Gastrocnemius medialis (tissue), 4 donors: ENCODE measurements at regions of chr19 and their contacts with region 1.

Region 1: GRCh38 chr19:15332311-15332996 is at the start of gene BRD4:
- DNase-seq: peak; percentile 38 to 62
- ATAC-seq: peak; percentile 63 to 72
- H3K4me3 ChIP-seq: peak within 1 kb of the TSS; percentile 82 to 97 (median 96)
- H3K27ac ChIP-seq: peak within 1 kb of the TSS; percentile 91 to 98 (median 96)
- H3K4me1 ChIP-seq: peaks cover 66 to 70% of the 10 kb centered on the region in 2 donors
- H3K27me3 ChIP-seq: no peaks in the 10 kb centered on the region
- CTCF ChIP-seq: no peak
- POLR2A ChIP-seq: peak; percentile 72 to 78
- total RNA-seq, gene BRD4: 64.8 to 83.2 (median 73.9) TPM

Region 2: GRCh38 chr19:14214580-14214979 is 1117.9 kb before region 1 on chr19:
- in situ Hi-C with region 1: no loop called
- intact Hi-C with region 1: no loop called
- DNase-seq: no peak
- ATAC-seq: no peak
- H3K4me3 ChIP-seq: no peak overlapping the region
- H3K27ac ChIP-seq: no peak overlapping the region
- H3K4me1 ChIP-seq: no peaks in the 10 kb centered on the region
- H3K27me3 ChIP-seq: peaks cover 9 to 15% (median 14%) of the 10 kb centered on the region in 3 donors
- CTCF ChIP-seq: no peak
- POLR2A ChIP-seq: no peak

Region 3: GRCh38 chr19:15234043-15234873 is 98.2 kb before region 1 on chr19:
- in situ Hi-C with region 1: no loop called
- intact Hi-C with region 1: no loop called
- DNase-seq: no peak
- ATAC-seq: no peak
- H3K4me3 ChIP-seq: no peak overlapping the region
- H3K27ac ChIP-seq: no peak overlapping the region
- H3K4me1 ChIP-seq: no peaks in the 10 kb centered on the region
- H3K27me3 ChIP-seq: peaks cover 13 to 16% (median 15%) of the 10 kb centered on the region in 3 donors
- CTCF ChIP-seq: no peak
- POLR2A ChIP-seq: no peak

Region 4: DNA sequence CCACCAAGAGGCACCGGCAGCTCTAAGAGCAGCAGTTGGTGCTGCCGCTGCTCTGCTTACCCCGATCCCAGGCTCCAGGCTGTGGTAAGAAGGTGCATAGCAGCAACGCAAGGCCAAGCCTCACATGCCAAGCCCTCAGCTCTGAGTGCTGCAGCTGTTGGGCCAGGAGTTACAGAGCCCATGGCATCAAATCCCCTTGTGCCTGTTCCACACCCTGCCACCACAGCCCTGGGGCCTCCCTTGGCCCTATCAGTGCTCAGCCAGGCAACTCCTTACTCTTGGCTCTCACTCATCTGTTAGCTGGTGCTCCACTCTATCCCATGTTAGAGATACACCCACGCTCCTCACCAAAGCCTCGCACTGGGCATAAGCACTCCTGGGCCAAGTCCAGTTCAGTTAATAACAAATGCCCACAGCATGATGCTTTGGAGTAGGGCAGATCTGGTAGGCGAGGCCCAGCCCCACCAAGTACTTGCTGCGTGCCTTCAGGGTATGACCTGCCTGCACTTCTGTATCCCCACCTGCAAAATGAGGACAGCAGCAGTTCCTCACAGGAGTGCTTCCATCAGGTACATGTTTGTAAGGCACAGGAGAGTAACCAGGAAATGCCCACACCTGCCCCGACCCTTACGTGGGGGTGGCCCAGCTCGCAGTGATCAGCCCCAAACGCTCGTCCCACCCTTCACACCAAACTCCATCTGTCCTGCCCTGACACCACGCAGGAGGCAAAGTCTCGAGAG is 70.1 kb after region 1 on chr19:
- in situ Hi-C with region 1: no loop called
- intact Hi-C with region 1: loop called (anchors 2 kb)
- DNase-seq: peak; percentile 56 to 90
- ATAC-seq: peak; percentile 42 to 76
- H3K4me3 ChIP-seq: no peak overlapping the region
- H3K27ac ChIP-seq: peak overlapping the region; percentile 73 to 96 (median 88)
- H3K4me1 ChIP-seq: peaks cover 74 to 84% of the 10 kb centered on the region in 2 donors
- H3K27me3 ChIP-seq: no peaks in the 10 kb centered on the region
- CTCF ChIP-seq: peak in 2 of 5 experiments; percentile 27 to 28
- POLR2A ChIP-seq: no peak

Region 5: DNA sequence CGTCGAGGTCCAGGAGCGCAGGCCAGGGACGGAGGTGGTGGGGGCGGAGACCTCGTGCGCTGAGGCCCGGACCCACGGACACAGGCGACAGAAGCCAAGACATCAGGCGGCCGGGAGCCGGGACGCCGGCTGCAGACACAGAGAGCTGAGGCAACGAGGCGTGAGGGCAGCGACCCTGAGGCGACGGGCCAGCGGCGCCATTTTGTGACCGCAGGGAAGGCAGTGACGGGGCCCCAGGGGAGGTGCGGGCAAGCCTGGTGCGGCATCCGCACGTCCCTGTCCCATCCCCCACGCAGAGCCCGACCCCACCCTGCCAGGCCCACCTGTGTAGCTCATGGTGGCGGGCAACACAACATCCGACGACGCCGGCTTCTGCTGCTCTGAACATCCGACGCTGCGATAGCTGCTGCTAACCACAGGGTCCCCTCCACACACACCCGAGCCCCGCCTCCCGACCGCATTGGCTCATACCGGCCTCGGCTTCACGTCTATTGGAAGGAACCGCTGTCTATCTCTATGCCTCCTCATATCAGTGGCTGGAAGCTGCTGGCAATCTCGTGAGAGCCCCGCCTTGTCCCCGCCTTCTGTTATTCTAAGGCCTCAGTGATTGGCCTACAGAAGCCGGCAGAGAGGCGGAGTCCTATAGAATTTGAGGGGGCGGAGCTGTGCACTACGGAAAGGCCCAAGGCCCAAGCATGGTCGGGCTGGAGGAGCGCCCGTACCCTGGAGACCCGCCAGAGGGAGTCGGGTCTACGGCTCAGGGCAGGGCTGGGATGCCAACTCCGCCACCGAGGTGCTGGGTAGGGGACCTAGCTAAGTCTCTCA is 86.3 kb after region 1 on chr19 and contains the start of gene AKAP8L:
- in situ Hi-C with region 1: no loop called
- intact Hi-C with region 1: loop called (anchors 5 kb)
- DNase-seq: peak; percentile 100
- ATAC-seq: peak; percentile 94 to 95
- H3K4me3 ChIP-seq: peak within 1 kb of the TSS; percentile 78 to 93 (median 90)
- H3K27ac ChIP-seq: peak within 1 kb of the TSS; percentile 91 to 97 (median 96)
- H3K4me1 ChIP-seq: peaks cover 54 to 60% of the 10 kb centered on the region in 2 donors
- H3K27me3 ChIP-seq: no peaks in the 10 kb centered on the region
- CTCF ChIP-seq: peak; percentile 42 to 64 (median 59)
- POLR2A ChIP-seq: peak; percentile 98 to 99
- total RNA-seq, gene AKAP8L: 69.3 to 142 (median 85.6) TPM